ENCODE measurements at regions of chr6 and their contacts with region 1.

Region 1: DNA sequence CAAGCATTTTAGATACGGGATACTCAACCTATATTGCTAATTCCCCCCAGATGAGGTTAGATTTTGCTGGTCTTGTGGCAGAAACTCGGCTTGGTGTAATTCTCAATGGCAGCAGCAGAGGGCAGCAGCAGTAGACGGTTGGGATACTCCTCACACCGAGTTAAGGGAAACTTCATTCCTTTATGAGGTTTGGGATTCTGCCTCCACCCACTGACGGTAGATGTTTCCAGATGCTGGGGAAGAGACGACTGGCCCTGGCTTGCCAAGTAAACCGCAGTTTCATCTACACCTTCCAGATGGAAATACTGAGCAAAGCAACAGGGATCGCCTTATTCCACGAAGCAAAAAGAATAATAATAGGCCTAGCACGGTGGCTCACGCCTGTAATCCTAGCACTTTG is 8.2 kb upstream of the TBC1D7 start:
- DNase-seq: peak; percentile 74 to 82 (median 75)
- H3K4me3 ChIP-seq: no peak overlapping the region
- H3K27ac ChIP-seq: no peak overlapping the region
- H3K4me1 ChIP-seq: peaks cover 8 to 31% (median 20%) of the 10 kb centered on the region in 4 experiments
- H3K27me3 ChIP-seq: no peaks in the 10 kb centered on the region

Region 2: DNA sequence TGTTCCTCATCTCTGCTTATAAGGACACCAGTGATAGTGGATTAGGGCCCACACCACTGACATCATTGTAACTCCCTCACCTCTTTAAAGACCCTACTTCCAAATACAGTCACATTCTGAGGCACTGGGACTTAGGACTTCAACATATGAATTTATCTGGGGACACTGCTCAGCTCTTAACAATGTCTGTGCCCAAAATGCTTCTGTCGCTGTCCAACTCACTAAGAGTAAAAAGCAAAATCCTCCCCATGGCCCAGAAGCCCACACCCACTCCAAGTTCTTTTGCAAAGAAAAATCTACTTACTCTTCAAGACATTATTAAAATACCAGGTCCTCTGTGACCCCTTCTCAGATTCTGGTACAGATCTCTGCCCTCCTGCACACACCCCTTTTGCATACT is 124.5 kb before region 1 on chr6:
- CTCF ChIA-PET with region 1: no interaction called
- POLR2A ChIA-PET with region 1: no interaction called
- DNase-seq: no peak
- H3K4me3 ChIP-seq: no peak overlapping the region
- H3K27ac ChIP-seq: no peak overlapping the region
- H3K4me1 ChIP-seq: peaks cover 2 to 10% (median 6%) of the 10 kb centered on the region in 4 experiments
- H3K27me3 ChIP-seq: no peaks in the 10 kb centered on the region

Region 3: DNA sequence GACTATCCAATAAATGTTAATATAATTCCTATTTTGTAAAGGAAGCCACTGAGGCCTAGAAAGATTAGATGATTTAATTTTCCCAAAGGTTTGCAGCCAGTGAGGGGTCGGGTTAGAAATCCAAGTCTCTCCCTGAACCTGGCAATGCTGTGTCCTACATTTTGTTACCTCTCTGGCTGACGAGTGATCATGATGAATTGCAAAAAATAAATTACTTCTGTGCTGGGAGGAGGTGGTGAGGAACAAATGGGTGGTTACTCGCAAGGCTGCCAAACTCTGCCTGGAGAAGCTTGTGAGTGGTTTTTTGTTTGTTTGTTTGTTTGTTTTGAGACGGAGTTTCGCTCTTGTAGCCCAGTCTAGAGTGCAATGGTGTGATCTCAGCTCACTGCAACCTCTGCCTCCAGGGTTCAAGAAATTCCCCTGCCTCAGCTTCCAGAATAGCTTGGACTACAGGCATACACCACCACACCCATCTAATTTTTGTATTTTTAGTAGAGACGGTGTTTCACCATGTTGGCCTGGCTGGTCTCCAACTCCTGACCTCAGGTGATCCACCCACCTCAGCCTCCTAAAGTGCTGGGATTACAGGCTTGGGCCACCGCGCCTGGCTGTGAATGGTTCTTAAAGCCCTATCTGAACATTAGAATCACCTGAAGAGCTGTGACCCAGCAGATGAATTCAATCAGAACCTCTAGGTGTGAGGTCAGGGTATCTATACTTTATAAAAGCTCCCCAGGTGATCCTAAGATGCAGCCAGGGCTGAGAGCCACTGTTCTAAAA is 12.0 kb after region 1 on chr6:
- CTCF ChIA-PET with region 1: interaction called, 11 read pairs
- POLR2A ChIA-PET with region 1: no interaction called
- DNase-seq: no peak
- H3K4me3 ChIP-seq: no peak overlapping the region
- H3K27ac ChIP-seq: no peak overlapping the region
- H3K4me1 ChIP-seq: peaks cover 0 to 8% (median 2%) of the 10 kb centered on the region in 4 experiments
- H3K27me3 ChIP-seq: no peaks in the 10 kb centered on the region

Region 4: DNA sequence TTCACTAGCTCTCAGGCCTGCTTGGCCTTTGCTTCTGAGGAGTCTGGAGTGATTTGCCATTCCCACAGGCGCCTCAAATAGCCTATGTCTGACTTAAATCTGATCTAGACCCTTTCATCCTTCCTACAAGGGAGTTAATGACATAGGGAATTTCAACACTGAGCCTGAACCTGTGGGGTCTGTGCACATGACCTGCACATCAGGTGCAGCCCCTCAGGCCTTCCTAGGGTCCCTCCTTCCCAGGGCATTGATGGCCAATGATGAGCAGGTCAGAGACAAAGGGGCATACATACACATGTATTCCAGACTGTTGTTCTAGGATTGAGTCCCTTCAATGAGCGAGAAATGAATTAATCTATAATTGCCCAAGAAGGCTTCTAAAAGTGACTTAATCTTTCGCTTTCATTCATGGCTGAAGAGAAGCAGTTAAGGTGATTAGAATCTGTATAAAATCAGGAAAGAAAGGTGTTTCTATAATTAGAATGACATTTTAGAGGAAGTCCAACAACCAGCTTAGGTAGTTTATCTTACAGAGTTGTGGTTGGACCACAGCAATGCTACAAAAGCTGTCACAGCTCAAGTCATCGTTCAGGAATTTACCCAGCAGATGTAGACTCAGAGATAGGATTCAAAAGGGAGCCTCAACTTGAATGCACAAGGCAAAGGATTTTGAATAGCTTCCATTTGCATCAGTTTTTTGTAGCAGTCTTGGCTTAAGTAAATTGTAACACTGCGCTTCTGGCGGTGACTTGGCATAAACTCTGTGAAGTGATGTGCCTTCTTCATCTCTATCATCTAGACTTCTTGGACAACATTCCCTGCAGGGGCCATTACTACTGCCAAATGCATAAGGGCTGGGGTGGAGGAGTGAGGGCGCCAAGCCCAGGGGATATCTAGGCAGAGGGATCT is 18.7 kb after region 1 on chr6:
- CTCF ChIA-PET with region 1: interaction called, 10 read pairs
- POLR2A ChIA-PET with region 1: no interaction called
- DNase-seq: peak; percentile 66 to 98 (median 95)
- H3K4me3 ChIP-seq: peak overlapping the region in 2 of 7 experiments; percentile 7 to 34
- H3K27ac ChIP-seq: peak overlapping the region in 1 of 2 experiments; percentile 44
- H3K4me1 ChIP-seq: peaks cover 16 to 43% (median 32%) of the 10 kb centered on the region in 4 experiments
- H3K27me3 ChIP-seq: no peaks in the 10 kb centered on the region

Region 5: GRCh38 chr6:13538084-13538483 is 201.5 kb after region 1 on chr6:
- CTCF ChIA-PET with region 1: interaction called, 15 read pairs
- POLR2A ChIA-PET with region 1: no interaction called
- DNase-seq: peak; percentile 66 to 75 (median 75)
- H3K4me3 ChIP-seq: no peak overlapping the region
- H3K27ac ChIP-seq: no peak overlapping the region
- H3K4me1 ChIP-seq: peaks cover 0 to 2% (median 0%) of the 10 kb centered on the region in 4 experiments
- H3K27me3 ChIP-seq: no peaks in the 10 kb centered on the region